CD8-positive, alpha-beta T cell (primary cell): ENCODE measurements at regions of chr17 and their contacts with region 1.

Region 1: DNA sequence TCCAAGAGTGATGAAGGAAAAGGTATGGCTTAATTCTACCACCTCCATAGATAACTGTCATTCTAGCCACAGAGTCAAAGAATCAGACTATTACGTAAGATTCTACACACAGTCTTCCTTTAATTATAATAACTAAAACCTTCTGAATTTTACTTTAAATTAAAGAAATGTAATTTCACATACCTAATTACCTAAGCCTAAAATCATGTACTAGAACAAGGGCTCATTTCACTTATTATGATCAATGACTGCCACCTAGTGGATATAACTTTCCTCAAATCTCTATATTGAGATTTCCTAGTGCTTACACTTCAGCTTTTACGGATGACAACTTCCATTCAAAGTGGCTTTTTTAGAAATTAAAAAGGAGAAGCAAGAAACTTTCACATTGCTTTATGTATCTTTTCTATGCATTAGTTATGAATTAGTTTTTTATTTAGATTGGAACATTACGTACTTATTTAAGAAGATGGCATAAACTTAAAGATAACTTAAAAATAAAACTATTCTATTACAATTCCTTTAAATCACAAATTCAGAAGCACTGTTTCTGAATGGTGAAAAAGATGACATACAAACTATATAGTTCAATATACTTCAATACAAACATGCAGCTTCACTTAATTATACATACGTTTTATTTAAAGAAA is 18.2 kb upstream of the ABCA10 start:
- DNase-seq: peak in 2 of 9 experiments; percentile 37 to 51
- ATAC-seq: no peak
- H3K4me3 ChIP-seq: no peak overlapping the region
- H3K4me3 Mint-ChIP-seq: no peak overlapping the region
- H3K27ac ChIP-seq: no peak overlapping the region
- H3K27ac Mint-ChIP-seq: no peak overlapping the region
- H3K4me1 ChIP-seq: no peaks in the 10 kb centered on the region
- H3K4me1 Mint-ChIP-seq: no peaks in the 10 kb centered on the region
- H3K27me3 ChIP-seq: no peaks in the 10 kb centered on the region
- H3K27me3 Mint-ChIP-seq: no peaks in the 10 kb centered on the region
- CTCF ChIP-seq: peak; percentile 87

Region 2: GRCh38 chr17:68533887-68534694 is 712.8 kb before region 1 on chr17:
- CTCF ChIA-PET with region 1: no interaction called
- POLR2A ChIA-PET with region 1: no interaction called
- intact Hi-C with region 1: loop called in 1 of 2 experiments (anchors 5 kb)
- DNase-seq: peak in 1 of 9 experiments; percentile 21
- ATAC-seq: no peak
- H3K4me3 ChIP-seq: no peak overlapping the region
- H3K4me3 Mint-ChIP-seq: no peak overlapping the region
- H3K27ac ChIP-seq: no peak overlapping the region
- H3K27ac Mint-ChIP-seq: peak overlapping the region; percentile 25
- H3K4me1 ChIP-seq: no peaks in the 10 kb centered on the region
- H3K4me1 Mint-ChIP-seq: no peaks in the 10 kb centered on the region
- H3K27me3 ChIP-seq: no peaks in the 10 kb centered on the region
- H3K27me3 Mint-ChIP-seq: no peaks in the 10 kb centered on the region
- CTCF ChIP-seq: peak; percentile 30

Region 3: DNA sequence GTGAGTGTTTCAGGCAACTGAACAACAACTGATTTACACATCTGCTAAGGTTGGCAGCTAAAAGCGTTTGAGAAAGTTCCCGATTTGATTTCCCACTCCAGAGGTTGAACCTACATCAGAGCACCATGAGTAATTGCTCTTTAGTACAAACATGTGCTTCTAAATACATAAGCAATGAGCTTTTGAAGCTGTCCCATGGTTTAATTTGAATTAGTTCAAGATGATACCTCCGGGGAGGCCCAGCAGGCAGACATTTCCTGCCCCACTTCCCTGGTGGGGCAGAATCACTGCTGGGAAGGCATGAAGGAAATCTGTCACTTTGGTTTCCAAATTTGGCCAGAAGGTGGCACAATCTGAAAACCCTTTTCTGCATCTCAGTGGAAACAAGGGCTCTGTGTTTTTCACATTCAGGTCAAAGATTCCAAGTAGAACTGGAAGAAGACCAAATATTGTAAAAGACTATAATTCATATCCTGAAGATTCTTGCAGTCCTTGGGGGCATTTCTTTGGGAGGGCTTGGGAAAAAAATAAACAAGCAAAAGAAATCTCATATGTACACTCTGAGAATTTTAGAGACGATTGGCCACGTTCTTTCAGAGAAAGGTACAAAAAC is 469.5 kb before region 1 on chr17:
- CTCF ChIA-PET with region 1: interaction called, 18 read pairs
- POLR2A ChIA-PET with region 1: no interaction called
- intact Hi-C with region 1: loop called (anchors 1 kb)
- DNase-seq: peak in 4 of 9 experiments; percentile 13 to 53 (median 28)
- ATAC-seq: no peak
- H3K4me3 ChIP-seq: no peak overlapping the region
- H3K4me3 Mint-ChIP-seq: no peak overlapping the region
- H3K27ac ChIP-seq: no peak overlapping the region
- H3K27ac Mint-ChIP-seq: no peak overlapping the region
- H3K4me1 ChIP-seq: no peaks in the 10 kb centered on the region
- H3K4me1 Mint-ChIP-seq: no peaks in the 10 kb centered on the region
- H3K27me3 ChIP-seq: no peaks in the 10 kb centered on the region
- H3K27me3 Mint-ChIP-seq: peaks cover 2% of the 10 kb centered on the region
- CTCF ChIP-seq: peak; percentile 62

Region 4: GRCh38 chr17:69060822-69061221 is 186.0 kb before region 1 on chr17 and contains the start of gene ABCA9:
- CTCF ChIA-PET with region 1: no interaction called
- POLR2A ChIA-PET with region 1: no interaction called
- intact Hi-C with region 1: no loop called
- DNase-seq: no peak
- ATAC-seq: no peak
- H3K4me3 ChIP-seq: no peak within 1 kb of the TSS
- H3K4me3 Mint-ChIP-seq: no peak within 1 kb of the TSS
- H3K27ac ChIP-seq: no peak within 1 kb of the TSS
- H3K27ac Mint-ChIP-seq: no peak within 1 kb of the TSS
- H3K4me1 ChIP-seq: no peaks in the 10 kb centered on the region
- H3K4me1 Mint-ChIP-seq: peaks cover 9% of the 10 kb centered on the region
- H3K27me3 ChIP-seq: no peaks in the 10 kb centered on the region
- H3K27me3 Mint-ChIP-seq: peaks cover under 1% of the 10 kb centered on the region
- CTCF ChIP-seq: no peak
- total RNA-seq, gene ABCA9: not detected

Region 5: GRCh38 chr17:69223809-69224208 is 23.0 kb before region 1 on chr17:
- CTCF ChIA-PET with region 1: no interaction called
- POLR2A ChIA-PET with region 1: no interaction called
- intact Hi-C with region 1: no loop called
- DNase-seq: no peak
- ATAC-seq: no peak
- H3K4me3 ChIP-seq: no peak overlapping the region
- H3K4me3 Mint-ChIP-seq: no peak overlapping the region
- H3K27ac ChIP-seq: no peak overlapping the region
- H3K27ac Mint-ChIP-seq: no peak overlapping the region
- H3K4me1 ChIP-seq: no peaks in the 10 kb centered on the region
- H3K4me1 Mint-ChIP-seq: peaks cover 21% of the 10 kb centered on the region
- H3K27me3 ChIP-seq: no peaks in the 10 kb centered on the region
- H3K27me3 Mint-ChIP-seq: no peaks in the 10 kb centered on the region
- CTCF ChIP-seq: no peak